ENCODE measurements at regions of chr17 and their contacts with region 1.

Region 1: DNA sequence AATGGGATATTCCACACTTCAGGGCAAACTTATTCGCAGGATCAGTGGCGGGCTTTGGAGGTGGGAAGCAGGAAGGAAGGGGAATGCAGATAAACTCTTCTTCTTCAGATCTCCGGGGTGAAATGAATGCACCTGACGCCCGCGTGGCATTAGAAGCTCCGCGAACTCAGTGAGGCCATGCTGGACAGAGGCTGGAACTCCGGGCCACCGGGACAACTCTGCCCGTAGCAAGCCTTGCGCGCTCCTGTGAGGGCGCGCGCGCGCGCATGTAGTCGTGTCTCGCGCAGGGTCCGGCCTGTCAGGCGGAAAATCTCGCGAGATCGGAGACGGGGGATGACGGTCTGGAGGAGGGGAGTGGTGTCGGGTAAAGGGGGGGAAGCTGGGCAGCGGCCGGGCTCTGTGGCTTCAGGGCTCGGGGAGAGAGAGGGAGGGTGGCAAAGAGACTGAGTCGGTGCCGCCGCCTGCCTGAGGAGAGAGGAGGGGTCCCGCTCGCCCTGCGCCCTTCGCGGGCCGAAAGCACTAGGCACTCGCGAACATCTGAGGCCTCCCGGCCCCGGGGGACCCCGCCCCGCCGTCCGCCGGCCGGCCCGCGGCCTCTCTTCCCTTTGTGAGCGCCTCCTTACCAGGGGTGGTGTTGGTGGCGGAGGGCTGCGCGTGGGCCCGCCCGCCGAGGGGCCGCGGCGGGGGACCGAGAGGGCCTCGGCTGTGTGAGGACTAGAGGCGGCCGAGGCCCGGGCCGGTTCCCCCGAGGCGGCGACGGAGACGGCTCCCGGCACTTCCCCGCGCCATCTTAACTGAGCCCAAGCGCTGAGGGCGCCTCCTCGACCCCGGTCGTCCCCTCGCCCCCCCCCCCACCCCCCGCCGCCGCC is at the start of gene TAOK1:
- DNase-seq: peak; percentile 95
- ATAC-seq: peak; percentile 95
- H3K4me3 Mint-ChIP-seq: peak within 1 kb of the TSS; percentile 91
- H3K27ac Mint-ChIP-seq: peak within 1 kb of the TSS; percentile 93
- H3K4me1 Mint-ChIP-seq: peaks cover 41% of the 10 kb centered on the region
- H3K27me3 Mint-ChIP-seq: no peaks in the 10 kb centered on the region
- CTCF ChIP-seq: no peak
- total RNA-seq, gene TAOK1: 55.1 and 55.5 TPM in 2 replicates

Region 2: DNA sequence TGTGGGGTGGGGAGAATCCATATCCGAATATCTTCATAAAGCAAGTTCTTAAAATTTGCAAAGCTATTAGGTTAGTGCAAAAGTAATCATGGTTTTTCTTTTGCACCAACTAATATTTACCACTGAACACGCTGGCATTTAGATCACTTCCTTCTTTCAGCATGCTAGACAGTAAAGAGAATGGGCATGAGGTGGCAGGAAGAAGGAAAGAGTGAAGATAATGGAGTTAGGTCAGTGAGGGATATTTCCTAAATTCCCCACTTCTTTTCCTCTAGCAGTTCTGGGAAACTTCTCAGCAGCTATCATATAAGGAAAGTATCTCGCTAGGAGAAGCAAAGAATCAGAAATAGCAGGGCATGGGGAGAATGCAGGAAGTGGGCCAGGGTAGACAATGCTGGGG is 806.3 kb after region 1 on chr17:
- CTCF ChIA-PET with region 1: no interaction called
- POLR2A ChIA-PET with region 1: no interaction called
- intact Hi-C with region 1: no loop called
- DNase-seq: no peak
- ATAC-seq: no peak
- H3K4me3 Mint-ChIP-seq: no peak overlapping the region
- H3K27ac Mint-ChIP-seq: no peak overlapping the region
- H3K4me1 Mint-ChIP-seq: no peaks in the 10 kb centered on the region
- H3K27me3 Mint-ChIP-seq: peaks cover 2% of the 10 kb centered on the region
- CTCF ChIP-seq: no peak

Region 3: GRCh38 chr17:30716461-30717300 is 1326.5 kb after region 1 on chr17:
- CTCF ChIA-PET with region 1: no interaction called
- POLR2A ChIA-PET with region 1: interaction called, 10 read pairs
- intact Hi-C with region 1: no loop called
- DNase-seq: no peak
- ATAC-seq: no peak
- H3K4me3 Mint-ChIP-seq: no peak overlapping the region
- H3K27ac Mint-ChIP-seq: no peak overlapping the region
- H3K4me1 Mint-ChIP-seq: peaks cover 11% of the 10 kb centered on the region
- H3K27me3 Mint-ChIP-seq: no peaks in the 10 kb centered on the region
- CTCF ChIP-seq: no peak

Measured in activated B cell treated with CpG ODN at 0.5 μM for 24 hours (primary cell).